PC-3 (cell line): ENCODE measurements at regions of chr3 and their contacts with region 1.

Region 1: DNA sequence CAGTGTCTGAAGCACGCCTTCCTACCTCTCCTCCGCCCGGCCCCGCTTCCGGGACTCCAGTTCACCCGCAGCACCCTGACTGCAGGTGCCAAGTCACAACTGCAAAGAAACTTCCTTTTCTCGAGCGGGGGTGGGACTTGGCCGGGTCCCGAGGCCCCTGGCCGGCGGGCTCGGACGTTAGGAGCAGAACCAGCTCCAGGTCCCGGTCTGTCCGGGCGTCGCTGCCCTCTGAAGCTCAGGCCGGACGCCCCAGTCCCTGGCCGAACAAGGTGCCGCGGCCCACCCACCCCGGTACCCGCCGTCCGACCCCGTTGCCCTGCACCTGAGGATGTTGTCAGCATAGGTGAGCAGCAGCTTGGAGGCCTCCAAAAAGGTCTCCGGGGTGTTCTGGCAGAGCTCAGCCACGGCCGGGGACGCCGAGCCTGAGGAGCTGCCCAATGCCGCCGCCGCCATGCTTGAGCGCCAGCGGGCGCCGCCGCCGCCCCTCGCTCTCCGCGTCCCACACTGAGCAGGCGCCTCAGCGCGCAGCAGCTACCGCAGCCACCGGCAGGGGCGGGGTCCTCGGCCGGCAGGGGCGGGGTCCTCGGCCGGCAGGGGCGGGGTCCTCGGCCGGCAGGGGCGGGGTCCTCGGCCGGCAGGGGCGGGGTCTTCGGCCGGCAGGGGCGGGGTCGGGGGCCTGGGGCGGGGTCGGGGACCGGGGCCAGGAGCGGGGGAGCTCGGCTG is at the start of gene NGLY1:
- DNase-seq: peak; percentile 83
- ATAC-seq: peak; percentile 90
- H3K4me3 ChIP-seq: peak within 1 kb of the TSS; percentile 87
- H3K27ac ChIP-seq: peak within 1 kb of the TSS; percentile 40
- H3K4me1 ChIP-seq: peaks cover 31% of the 10 kb centered on the region
- H3K27me3 ChIP-seq: no peaks in the 10 kb centered on the region
- CTCF ChIP-seq: no peak
- total RNA-seq, gene NGLY1: 47.7 and 49.4 TPM in 2 replicates

Region 2: DNA sequence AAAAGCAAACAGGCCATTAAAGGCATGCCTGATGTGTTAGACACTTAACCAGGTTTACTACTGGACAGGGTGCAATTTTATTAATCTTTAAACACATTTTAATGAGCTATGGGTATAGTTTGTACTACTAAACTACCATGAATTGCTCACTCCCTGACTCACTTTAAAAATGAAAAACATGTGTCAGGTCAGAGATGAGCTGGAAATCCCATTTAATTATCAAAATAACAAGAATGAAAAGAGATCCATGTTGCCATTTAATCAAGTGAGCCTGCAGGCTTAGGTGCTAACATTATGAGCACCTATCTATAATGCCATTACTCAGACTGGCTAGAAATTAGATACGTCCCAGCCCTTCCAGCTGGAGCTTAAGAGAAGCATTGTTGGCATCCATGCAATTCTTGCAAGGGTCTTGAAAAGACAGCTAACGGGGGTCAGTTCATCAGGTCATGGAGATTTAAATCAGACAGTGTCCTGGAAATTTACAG is 1512.9 kb before region 1 on chr3:
- CTCF ChIA-PET with region 1: no interaction called
- POLR2A ChIA-PET with region 1: no interaction called
- intact Hi-C with region 1: no loop called
- DNase-seq: no peak
- ATAC-seq: no peak
- H3K4me3 ChIP-seq: no peak overlapping the region
- H3K27ac ChIP-seq: no peak overlapping the region
- H3K4me1 ChIP-seq: peaks cover 32% of the 10 kb centered on the region
- H3K27me3 ChIP-seq: no peaks in the 10 kb centered on the region
- CTCF ChIP-seq: no peak

Region 3: DNA sequence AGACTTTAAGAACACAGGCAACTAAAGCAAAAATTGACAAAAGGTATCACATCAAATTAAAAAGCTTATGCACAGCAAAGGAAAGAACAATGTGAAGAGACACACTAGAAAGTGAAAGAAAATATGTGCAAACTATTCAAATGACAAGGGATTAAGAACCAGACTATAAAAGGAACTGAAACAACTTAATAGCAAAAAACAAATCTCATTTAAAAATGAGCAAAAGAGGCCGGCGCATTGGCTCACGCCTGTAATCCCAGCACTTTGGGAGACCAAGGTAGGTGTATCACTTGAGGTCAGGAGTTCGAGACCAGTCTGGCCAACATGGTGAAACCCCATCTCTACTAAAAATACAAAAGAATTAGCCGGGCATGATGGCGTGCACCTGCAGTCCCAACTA is 14.2 kb before region 1 on chr3:
- CTCF ChIA-PET with region 1: no interaction called
- POLR2A ChIA-PET with region 1: no interaction called
- intact Hi-C with region 1: no loop called
- DNase-seq: no peak
- ATAC-seq: no peak
- H3K4me3 ChIP-seq: no peak overlapping the region
- H3K27ac ChIP-seq: no peak overlapping the region
- H3K4me1 ChIP-seq: no peaks in the 10 kb centered on the region
- H3K27me3 ChIP-seq: no peaks in the 10 kb centered on the region
- CTCF ChIP-seq: no peak

Region 4: GRCh38 chr3:25801786-25802185 is 18.7 kb after region 1 on chr3:
- CTCF ChIA-PET with region 1: interaction called, 11 read pairs
- POLR2A ChIA-PET with region 1: no interaction called
- intact Hi-C with region 1: no loop called
- DNase-seq: no peak
- ATAC-seq: no peak
- H3K4me3 ChIP-seq: no peak overlapping the region
- H3K27ac ChIP-seq: no peak overlapping the region
- H3K4me1 ChIP-seq: no peaks in the 10 kb centered on the region
- H3K27me3 ChIP-seq: no peaks in the 10 kb centered on the region
- CTCF ChIP-seq: no peak

Region 5: DNA sequence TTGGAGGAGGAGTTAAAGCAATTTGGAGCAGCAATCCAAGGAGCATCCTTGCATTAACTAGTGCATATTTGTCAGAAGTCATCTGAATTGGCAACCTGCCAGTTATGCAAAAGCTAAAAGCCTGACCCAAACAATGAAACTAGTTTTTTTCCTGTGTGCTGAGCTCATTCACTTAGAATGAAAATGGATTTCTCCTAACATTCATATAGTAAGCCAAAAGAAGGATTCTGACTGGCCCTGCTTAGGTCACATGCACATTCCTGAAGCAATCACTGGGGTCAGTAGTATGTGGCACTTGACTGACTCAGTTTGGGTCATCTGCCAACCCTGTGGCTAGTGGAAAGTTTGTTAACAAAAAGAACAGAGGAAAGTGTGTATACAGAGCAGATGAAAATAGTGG is 37.3 kb after region 1 on chr3:
- CTCF ChIA-PET with region 1: no interaction called
- POLR2A ChIA-PET with region 1: no interaction called
- intact Hi-C with region 1: loop called (anchors 2 kb)
- DNase-seq: peak; percentile 87
- ATAC-seq: peak; percentile 88
- H3K4me3 ChIP-seq: no peak overlapping the region
- H3K27ac ChIP-seq: peak overlapping the region; percentile 43
- H3K4me1 ChIP-seq: peaks cover 15% of the 10 kb centered on the region
- H3K27me3 ChIP-seq: no peaks in the 10 kb centered on the region
- CTCF ChIP-seq: no peak